ENCODE measurements at regions of chr12 and their contacts with region 1.

Region 1: GRCh38 chr12:119479121-119479659 is 114.4 kb upstream of the TMEM233 start:
- DNase-seq: no peak
- H3K4me3 ChIP-seq: no peak overlapping the region
- H3K27ac ChIP-seq: no peak overlapping the region
- H3K4me1 ChIP-seq: no peaks in the 10 kb centered on the region
- H3K27me3 ChIP-seq: no peaks in the 10 kb centered on the region
- CTCF ChIP-seq: no peak
- POLR2A ChIP-seq: no peak

Region 2: GRCh38 chr12:118958520-118958919 is 520.7 kb before region 1 on chr12:
- intact Hi-C with region 1: loop called (anchors 10 kb)
- DNase-seq: no peak
- H3K4me3 ChIP-seq: no peak overlapping the region
- H3K27ac ChIP-seq: no peak overlapping the region
- H3K4me1 ChIP-seq: no peaks in the 10 kb centered on the region
- H3K27me3 ChIP-seq: no peaks in the 10 kb centered on the region
- CTCF ChIP-seq: no peak
- POLR2A ChIP-seq: no peak

Region 3: DNA sequence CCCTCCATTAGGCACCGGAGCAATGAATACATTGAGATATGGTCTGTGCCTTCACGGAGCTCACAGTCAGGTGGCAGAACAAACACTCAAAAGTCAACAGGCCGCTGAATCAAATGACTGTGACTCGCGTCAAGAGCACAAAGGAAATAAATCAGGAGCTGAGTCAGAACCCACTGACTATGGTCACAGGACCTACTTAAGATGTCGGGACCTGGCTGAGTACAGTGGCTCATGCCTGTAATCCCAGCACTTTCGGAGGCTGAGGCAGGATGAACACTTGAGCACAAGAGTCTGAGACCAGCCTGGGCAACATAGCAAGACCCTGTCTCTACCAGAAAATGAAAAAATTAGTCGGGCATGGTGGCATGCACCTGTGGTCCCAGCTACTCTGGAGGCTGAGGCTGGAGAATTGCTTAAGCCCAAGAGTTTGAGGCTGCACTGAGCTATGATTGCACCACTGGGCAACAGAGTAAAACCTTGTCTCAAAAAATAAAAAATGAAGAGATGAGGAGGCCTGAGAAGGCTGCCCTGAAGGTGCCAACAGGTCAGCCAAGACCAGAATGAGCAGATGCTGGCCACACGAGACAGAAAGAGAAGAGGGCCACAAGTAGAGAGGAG is 134.2 kb after region 1 on chr12:
- intact Hi-C with region 1: no loop called
- DNase-seq: no peak
- H3K4me3 ChIP-seq: no peak overlapping the region
- H3K27ac ChIP-seq: no peak overlapping the region
- H3K4me1 ChIP-seq: no peaks in the 10 kb centered on the region
- H3K27me3 ChIP-seq: no peaks in the 10 kb centered on the region
- CTCF ChIP-seq: no peak
- POLR2A ChIP-seq: no peak